Activated B cell treated with CpG ODN at 0.5 μM for 24 hours (primary cell): ENCODE measurements at regions of chr9 and their contacts with region 1.

Region 1: GRCh38 chr9:128067876-128068613 is at the start of gene SLC25A25:
- DNase-seq: peak; percentile 100
- ATAC-seq: peak; percentile 84
- H3K4me3 Mint-ChIP-seq: no peak within 1 kb of the TSS
- H3K27ac Mint-ChIP-seq: peak within 1 kb of the TSS; percentile 60
- H3K4me1 Mint-ChIP-seq: peaks cover 68% of the 10 kb centered on the region
- H3K27me3 Mint-ChIP-seq: no peaks in the 10 kb centered on the region
- CTCF ChIP-seq: no peak
- total RNA-seq, gene SLC25A25: 8.0 and 9.4 TPM in 2 replicates

Region 2: GRCh38 chr9:127770905-127771569 is 297.0 kb before region 1 on chr9:
- CTCF ChIA-PET with region 1: no interaction called
- POLR2A ChIA-PET with region 1: no interaction called
- intact Hi-C with region 1: loop called (anchors 5 kb)
- DNase-seq: peak; percentile 98
- ATAC-seq: peak; percentile 90
- H3K4me3 Mint-ChIP-seq: peak overlapping the region; percentile 93
- H3K27ac Mint-ChIP-seq: peak overlapping the region; percentile 93
- H3K4me1 Mint-ChIP-seq: peaks cover 72% of the 10 kb centered on the region
- H3K27me3 Mint-ChIP-seq: no peaks in the 10 kb centered on the region
- CTCF ChIP-seq: no peak

Region 3: DNA sequence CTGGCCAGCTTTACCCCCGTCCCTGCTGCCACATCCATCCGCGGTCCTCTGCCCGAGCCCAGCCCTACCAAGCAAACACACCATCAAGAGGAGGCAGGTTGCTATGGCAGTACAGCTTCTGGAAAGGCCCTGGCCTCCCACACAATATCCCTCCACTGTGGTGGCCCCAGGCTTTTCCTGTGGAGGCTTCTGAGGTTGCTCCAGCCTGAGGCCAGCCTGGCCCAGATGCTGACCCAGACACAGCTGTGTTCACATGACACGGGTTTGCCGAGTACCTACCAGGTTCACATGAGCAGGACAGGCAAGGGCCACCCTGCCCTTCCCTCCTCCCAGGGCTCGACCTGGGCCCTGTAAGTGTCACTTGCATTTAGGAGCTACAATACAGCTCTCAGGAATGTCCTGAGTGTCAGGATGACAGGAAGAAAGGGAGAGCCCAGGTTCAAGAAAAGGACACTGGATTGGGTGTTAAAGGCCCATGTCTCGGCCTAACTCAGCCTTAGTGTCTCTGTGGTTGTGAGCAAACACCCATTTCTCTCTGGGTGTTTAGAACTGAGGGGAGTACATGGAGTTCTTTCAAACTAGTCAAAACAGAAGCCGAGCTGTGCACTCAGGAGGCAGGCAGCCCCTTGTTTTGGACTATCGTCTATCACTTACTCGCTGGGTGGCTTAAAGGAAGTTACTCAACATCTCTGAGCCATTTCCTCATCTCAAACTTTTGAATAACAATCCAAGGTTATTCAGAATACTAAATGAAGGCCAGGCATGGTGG is 41.1 kb before region 1 on chr9:
- CTCF ChIA-PET with region 1: no interaction called
- POLR2A ChIA-PET with region 1: interaction called, 5 read pairs
- intact Hi-C with region 1: loop called (anchors 2 kb)
- DNase-seq: no peak
- ATAC-seq: peak; percentile 14
- H3K4me3 Mint-ChIP-seq: peak overlapping the region; percentile 67
- H3K27ac Mint-ChIP-seq: peak overlapping the region; percentile 88
- H3K4me1 Mint-ChIP-seq: peaks cover 86% of the 10 kb centered on the region
- H3K27me3 Mint-ChIP-seq: no peaks in the 10 kb centered on the region
- CTCF ChIP-seq: no peak

Region 4: DNA sequence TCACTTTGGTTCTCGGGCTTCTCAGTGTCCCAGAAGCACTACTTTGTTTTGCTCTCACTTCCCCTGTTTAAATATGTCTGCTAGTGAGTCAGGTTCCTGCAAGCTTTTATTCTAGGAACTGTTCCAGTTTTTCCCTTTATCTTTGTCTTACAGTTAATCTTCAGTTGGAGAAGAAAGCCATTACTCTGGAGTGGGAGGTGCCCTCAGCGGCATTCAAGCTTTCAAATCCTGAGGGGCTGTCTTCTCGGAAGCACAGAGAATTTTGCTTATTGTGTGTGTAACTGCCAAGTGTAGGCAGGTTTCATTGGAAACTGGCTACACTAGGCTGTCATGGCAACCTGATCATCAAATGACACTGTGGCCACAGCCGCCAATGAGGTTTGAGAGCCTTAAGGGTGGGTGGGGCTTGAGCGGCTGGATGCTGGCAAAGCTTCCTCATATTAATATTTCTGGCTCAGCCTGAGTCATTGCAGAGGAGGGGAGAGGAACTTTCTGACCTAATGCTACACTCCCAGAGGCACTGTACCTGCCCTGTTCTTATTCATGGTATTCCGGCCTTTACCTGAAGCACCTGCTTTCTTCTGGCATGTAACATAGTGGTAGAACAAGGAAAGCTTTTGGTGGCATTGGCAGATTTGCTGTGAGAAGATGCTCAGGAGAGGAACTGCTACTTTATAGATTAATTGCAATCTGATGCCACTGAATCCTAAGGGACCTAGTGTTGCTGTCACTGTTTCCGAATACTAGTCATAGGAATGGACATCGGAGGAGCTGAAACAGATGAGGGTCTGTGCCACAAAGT is 26.3 kb after region 1 on chr9:
- CTCF ChIA-PET with region 1: interaction called, 5 read pairs
- POLR2A ChIA-PET with region 1: interaction called, 13 read pairs
- intact Hi-C with region 1: loop called (anchors 1 kb)
- DNase-seq: peak; percentile 67
- ATAC-seq: peak; percentile 92
- H3K4me3 Mint-ChIP-seq: peak overlapping the region; percentile 71
- H3K27ac Mint-ChIP-seq: peak overlapping the region; percentile 99
- H3K4me1 Mint-ChIP-seq: peaks cover 42% of the 10 kb centered on the region
- H3K27me3 Mint-ChIP-seq: no peaks in the 10 kb centered on the region
- CTCF ChIP-seq: no peak

Region 5: GRCh38 chr9:128127990-128128835 is 60.2 kb after region 1 on chr9:
- CTCF ChIA-PET with region 1: no interaction called
- POLR2A ChIA-PET with region 1: interaction called, 11 read pairs
- intact Hi-C with region 1: loop called (anchors 1 kb)
- DNase-seq: peak; percentile 90
- ATAC-seq: peak; percentile 79
- H3K4me3 Mint-ChIP-seq: peak overlapping the region; percentile 97
- H3K27ac Mint-ChIP-seq: peak overlapping the region; percentile 99
- H3K4me1 Mint-ChIP-seq: peaks cover 34% of the 10 kb centered on the region
- H3K27me3 Mint-ChIP-seq: peaks cover 3% of the 10 kb centered on the region
- CTCF ChIP-seq: no peak

Region 6: GRCh38 chr9:128504485-128505413 is 436.7 kb after region 1 on chr9 and contains the start of gene GLE1:
- CTCF ChIA-PET with region 1: no interaction called
- POLR2A ChIA-PET with region 1: no interaction called
- intact Hi-C with region 1: loop called (anchors 5 kb)
- DNase-seq: peak; percentile 99
- ATAC-seq: peak; percentile 95
- H3K4me3 Mint-ChIP-seq: peak within 1 kb of the TSS; percentile 99
- H3K27ac Mint-ChIP-seq: peak within 1 kb of the TSS; percentile 98
- H3K4me1 Mint-ChIP-seq: peaks cover 24% of the 10 kb centered on the region
- H3K27me3 Mint-ChIP-seq: no peaks in the 10 kb centered on the region
- CTCF ChIP-seq: no peak
- total RNA-seq, gene GLE1: 28.8 and 31.8 TPM in 2 replicates